CD8-positive, alpha-beta T cell (primary cell): ENCODE measurements at regions of chr11 and their contacts with region 1.

Region 1: DNA sequence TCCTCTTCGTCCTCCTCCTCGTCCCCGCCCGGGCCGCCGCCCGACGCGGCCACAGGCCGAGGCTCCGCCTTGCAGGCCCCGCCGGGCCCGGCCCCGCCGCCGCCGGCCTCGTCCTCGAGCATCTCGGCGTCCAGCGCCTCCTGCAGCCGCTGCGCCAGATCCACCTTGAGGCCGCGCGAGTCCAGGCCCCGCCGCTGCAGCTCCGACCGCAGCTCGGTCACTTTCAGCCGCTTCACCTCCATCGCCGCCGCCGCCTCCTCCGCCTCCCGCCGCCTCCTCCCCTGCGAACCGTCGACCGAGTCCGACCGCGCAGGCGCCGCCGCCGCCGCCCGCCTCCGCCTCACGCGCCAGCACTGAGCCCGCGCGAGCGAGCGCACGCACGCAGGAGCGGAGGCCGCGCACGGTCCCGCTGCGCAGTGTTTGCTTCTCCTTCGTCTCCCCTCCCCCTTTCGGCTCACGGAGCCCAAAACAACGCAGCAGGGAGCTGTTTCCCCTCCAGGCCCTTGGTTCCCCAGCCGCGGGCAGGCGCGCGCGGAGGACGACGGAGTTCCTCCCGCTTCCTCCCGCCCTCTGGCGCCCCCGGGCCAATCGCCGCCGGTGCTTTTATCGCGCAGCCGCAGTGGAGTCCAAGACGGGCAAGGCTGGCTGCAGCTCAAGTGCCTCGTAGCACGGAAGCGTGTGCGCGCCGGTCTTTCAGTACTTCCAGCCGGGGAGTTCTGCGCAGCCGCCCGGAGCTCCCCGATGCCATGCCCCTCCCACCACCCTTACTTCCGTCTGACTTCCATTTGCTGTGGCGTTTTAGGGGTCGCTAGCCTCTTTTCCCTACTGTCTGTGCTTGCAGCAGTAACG is at the start of gene HNRNPUL2:
- DNase-seq: peak; percentile 96 to 100 (median 99)
- ATAC-seq: peak; percentile 85
- H3K4me3 ChIP-seq: peak within 1 kb of the TSS; percentile 77 to 81
- H3K4me3 Mint-ChIP-seq: peak within 1 kb of the TSS; percentile 96
- H3K27ac ChIP-seq: peak within 1 kb of the TSS; percentile 82 to 91
- H3K27ac Mint-ChIP-seq: peak within 1 kb of the TSS; percentile 98
- H3K4me1 ChIP-seq: peaks cover 46% of the 10 kb centered on the region
- H3K4me1 Mint-ChIP-seq: peaks cover 57% of the 10 kb centered on the region
- H3K27me3 ChIP-seq: no peaks in the 10 kb centered on the region
- H3K27me3 Mint-ChIP-seq: no peaks in the 10 kb centered on the region
- CTCF ChIP-seq: no peak
- total RNA-seq, gene HNRNPUL2: 29.6 to 31.5 TPM

Region 2: GRCh38 chr11:62671575-62672389 is 55.4 kb before region 1 on chr11 and contains the starts of genes LBHD1 and UQCC3:
- CTCF ChIA-PET with region 1: no interaction called
- POLR2A ChIA-PET with region 1: interaction called, 12 read pairs
- intact Hi-C with region 1: no loop called
- DNase-seq: peak; percentile 41 to 87 (median 70)
- ATAC-seq: peak; percentile 63
- H3K4me3 ChIP-seq: peak within 1 kb of the TSS; percentile 93 to 99
- H3K4me3 Mint-ChIP-seq: peak within 1 kb of the TSS; percentile 99
- H3K27ac ChIP-seq: peak within 1 kb of the TSS; percentile 77 to 78
- H3K27ac Mint-ChIP-seq: peak within 1 kb of the TSS; percentile 92
- H3K4me1 ChIP-seq: peaks cover 36% of the 10 kb centered on the region
- H3K4me1 Mint-ChIP-seq: peaks cover 62% of the 10 kb centered on the region
- H3K27me3 ChIP-seq: no peaks in the 10 kb centered on the region
- H3K27me3 Mint-ChIP-seq: no peaks in the 10 kb centered on the region
- CTCF ChIP-seq: no peak
- total RNA-seq, gene LBHD1: 14.5 to 14.6 TPM
- total RNA-seq, gene UQCC3: 1.1 to 1.7 TPM

Region 3: DNA sequence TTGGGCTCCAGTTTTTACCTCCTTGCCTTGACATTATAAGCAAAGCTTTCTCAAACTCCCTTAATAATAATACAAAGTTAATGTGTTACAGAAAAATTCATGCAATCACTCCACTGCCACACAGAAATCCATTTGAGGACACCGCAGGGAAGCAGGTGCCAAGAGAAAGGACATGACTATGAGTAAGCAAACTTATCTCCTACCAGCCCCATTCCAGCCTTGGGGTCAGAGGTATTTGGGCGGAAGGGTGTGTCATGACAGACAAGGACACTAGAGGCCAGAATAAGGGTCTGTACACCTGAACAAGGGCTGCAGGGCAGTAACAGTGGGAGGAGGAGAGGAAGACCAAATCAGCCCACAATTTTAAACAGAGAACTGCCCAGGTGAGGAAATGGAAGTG is 13.8 kb before region 1 on chr11:
- CTCF ChIA-PET with region 1: interaction called, 6 read pairs
- POLR2A ChIA-PET with region 1: interaction called, 82 read pairs
- intact Hi-C with region 1: loop called (anchors 1 kb)
- DNase-seq: no peak
- ATAC-seq: no peak
- H3K4me3 ChIP-seq: no peak overlapping the region
- H3K4me3 Mint-ChIP-seq: no peak overlapping the region
- H3K27ac ChIP-seq: peak overlapping the region in 1 of 2 experiments; percentile 21
- H3K27ac Mint-ChIP-seq: no peak overlapping the region
- H3K4me1 ChIP-seq: peaks cover 16% of the 10 kb centered on the region
- H3K4me1 Mint-ChIP-seq: peaks cover 52% of the 10 kb centered on the region
- H3K27me3 ChIP-seq: no peaks in the 10 kb centered on the region
- H3K27me3 Mint-ChIP-seq: no peaks in the 10 kb centered on the region
- CTCF ChIP-seq: no peak

Region 4: DNA sequence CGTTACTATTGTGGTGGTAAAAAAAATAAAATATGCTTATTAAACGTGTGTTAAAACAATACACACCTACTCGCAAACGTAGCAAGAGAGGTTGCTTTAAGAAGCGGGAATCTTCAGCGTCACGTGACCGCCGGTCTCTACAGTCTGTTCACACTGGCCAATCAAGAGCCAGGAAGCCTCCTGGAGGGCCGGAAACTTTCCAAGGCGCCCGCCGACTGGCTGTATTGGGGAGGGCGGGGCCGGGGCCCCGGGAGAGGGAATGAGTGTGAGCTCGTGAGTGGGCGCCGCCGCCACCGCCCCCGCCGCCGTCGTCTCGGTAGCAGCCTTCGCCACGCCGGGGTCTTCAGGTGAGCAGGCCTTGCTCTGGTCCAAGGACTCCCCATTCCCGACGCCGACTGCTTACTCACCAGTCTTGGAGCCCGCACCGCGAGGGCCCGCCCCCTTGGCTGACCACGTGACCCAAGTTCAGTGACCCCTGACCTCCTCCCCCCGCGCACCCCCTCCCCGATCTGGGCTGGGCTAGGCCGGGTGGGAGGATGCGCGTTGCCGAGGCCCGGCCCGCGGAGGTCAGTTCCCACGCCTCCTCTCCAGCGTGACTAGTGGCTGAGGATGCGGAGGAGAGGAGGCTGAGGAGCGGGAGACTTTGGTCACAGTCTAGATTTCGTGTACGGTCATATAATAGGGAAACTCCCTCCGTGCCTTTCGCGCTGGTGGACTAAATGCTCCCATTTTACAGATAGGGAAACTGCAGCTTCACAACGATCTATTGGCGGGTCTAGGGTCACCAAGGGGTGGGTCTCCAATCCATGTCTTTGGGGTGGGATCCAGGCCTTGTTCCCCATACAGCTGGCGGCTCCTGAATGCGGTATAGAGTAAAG is 44.2 kb after region 1 on chr11 and contains the start of gene TAF6L:
- CTCF ChIA-PET with region 1: interaction called, 3 read pairs
- POLR2A ChIA-PET with region 1: interaction called, 26 read pairs
- intact Hi-C with region 1: loop called in 1 of 2 experiments (anchors 1 kb)
- DNase-seq: peak; percentile 74 to 93 (median 87)
- ATAC-seq: peak; percentile 83
- H3K4me3 ChIP-seq: peak within 1 kb of the TSS; percentile 66 to 78
- H3K4me3 Mint-ChIP-seq: peak within 1 kb of the TSS; percentile 91
- H3K27ac ChIP-seq: peak within 1 kb of the TSS; percentile 64 to 83
- H3K27ac Mint-ChIP-seq: peak within 1 kb of the TSS; percentile 94
- H3K4me1 ChIP-seq: peaks cover 22% of the 10 kb centered on the region
- H3K4me1 Mint-ChIP-seq: peaks cover 27% of the 10 kb centered on the region
- H3K27me3 ChIP-seq: no peaks in the 10 kb centered on the region
- H3K27me3 Mint-ChIP-seq: no peaks in the 10 kb centered on the region
- CTCF ChIP-seq: no peak
- total RNA-seq, gene TAF6L: 10.3 to 13.2 TPM

Region 5: DNA sequence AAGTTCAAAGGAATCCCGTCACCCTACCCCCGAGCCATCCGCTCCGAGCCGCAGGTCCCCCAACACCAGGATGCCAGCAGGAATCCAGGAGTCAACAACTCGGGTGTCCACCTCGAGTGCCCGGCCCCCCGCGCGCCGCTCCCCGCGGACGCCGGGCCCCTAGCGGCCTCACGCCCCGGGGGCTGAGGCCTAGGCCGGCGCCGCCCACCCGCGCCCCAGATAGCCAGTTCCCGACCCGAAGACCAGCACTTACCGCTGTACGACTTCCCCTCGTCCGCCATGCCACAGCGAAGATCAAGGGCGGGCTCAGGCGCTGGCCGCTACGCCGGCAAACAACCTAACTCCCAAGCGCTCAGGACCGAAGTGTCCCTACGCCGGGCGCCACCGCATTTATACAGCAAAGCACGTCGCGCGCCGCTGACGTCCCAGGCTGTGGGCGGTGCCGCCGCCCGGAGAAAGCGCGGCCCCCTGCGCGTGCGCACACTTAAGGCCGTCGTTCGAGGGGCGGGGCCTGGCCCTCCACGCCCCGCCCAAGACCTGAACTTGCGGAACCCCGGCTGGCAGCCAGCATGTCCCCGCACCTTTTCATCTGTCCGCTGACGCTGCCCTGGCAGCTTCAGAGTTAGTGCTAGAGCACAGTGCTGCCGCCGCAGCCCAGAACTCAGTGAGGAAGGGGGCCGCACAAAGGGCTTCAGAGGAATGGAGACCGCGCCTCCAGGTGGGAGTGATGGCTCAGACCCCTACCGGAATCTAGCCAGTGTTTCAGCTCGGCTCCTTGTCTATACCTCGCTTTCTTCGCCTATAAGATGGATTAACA is 78.1 kb after region 1 on chr11 and contains the start of gene NXF1:
- CTCF ChIA-PET with region 1: no interaction called
- POLR2A ChIA-PET with region 1: no interaction called
- intact Hi-C with region 1: loop called in 1 of 2 experiments (anchors 1 kb)
- DNase-seq: peak; percentile 92 to 99 (median 96)
- ATAC-seq: peak; percentile 86
- H3K4me3 ChIP-seq: peak within 1 kb of the TSS; percentile 74 to 88
- H3K4me3 Mint-ChIP-seq: peak within 1 kb of the TSS; percentile 100
- H3K27ac ChIP-seq: peak within 1 kb of the TSS; percentile 78 to 95
- H3K27ac Mint-ChIP-seq: peak within 1 kb of the TSS; percentile 99
- H3K4me1 ChIP-seq: peaks cover 20% of the 10 kb centered on the region
- H3K4me1 Mint-ChIP-seq: peaks cover 37% of the 10 kb centered on the region
- H3K27me3 ChIP-seq: no peaks in the 10 kb centered on the region
- H3K27me3 Mint-ChIP-seq: no peaks in the 10 kb centered on the region
- CTCF ChIP-seq: no peak
- total RNA-seq, gene NXF1: 356 TPM

Region 6: GRCh38 chr11:62841361-62842184 is 114.4 kb after region 1 on chr11:
- CTCF ChIA-PET with region 1: no interaction called
- POLR2A ChIA-PET with region 1: interaction called, 70 read pairs
- intact Hi-C with region 1: loop called (anchors 1 kb)
- DNase-seq: peak; percentile 69 to 95 (median 80)
- ATAC-seq: peak; percentile 49
- H3K4me3 ChIP-seq: peak overlapping the region; percentile 61 to 79
- H3K4me3 Mint-ChIP-seq: no peak overlapping the region
- H3K27ac ChIP-seq: peak overlapping the region; percentile 97 to 99
- H3K27ac Mint-ChIP-seq: no peak overlapping the region
- H3K4me1 ChIP-seq: peaks cover 32% of the 10 kb centered on the region
- H3K4me1 Mint-ChIP-seq: peaks cover 25% of the 10 kb centered on the region
- H3K27me3 ChIP-seq: no peaks in the 10 kb centered on the region
- H3K27me3 Mint-ChIP-seq: no peaks in the 10 kb centered on the region
- CTCF ChIP-seq: no peak

Region 7: GRCh38 chr11:62860835-62861563 is 133.9 kb after region 1 on chr11:
- CTCF ChIA-PET with region 1: interaction called, 3 read pairs
- POLR2A ChIA-PET with region 1: interaction called, 46 read pairs
- intact Hi-C with region 1: loop called (anchors 1 to 2 kb)
- DNase-seq: no peak
- ATAC-seq: no peak
- H3K4me3 ChIP-seq: no peak overlapping the region
- H3K4me3 Mint-ChIP-seq: no peak overlapping the region
- H3K27ac ChIP-seq: no peak overlapping the region
- H3K27ac Mint-ChIP-seq: no peak overlapping the region
- H3K4me1 ChIP-seq: peaks cover 6% of the 10 kb centered on the region
- H3K4me1 Mint-ChIP-seq: peaks cover 21% of the 10 kb centered on the region
- H3K27me3 ChIP-seq: no peaks in the 10 kb centered on the region
- H3K27me3 Mint-ChIP-seq: no peaks in the 10 kb centered on the region
- CTCF ChIP-seq: no peak